Activated CD4-positive, alpha-beta T cell treated with anti-CD3 and anti-CD28 coated beads for 36 hours (primary cell): ENCODE measurements at regions of chr4 and their contacts with region 1.

Region 1: DNA sequence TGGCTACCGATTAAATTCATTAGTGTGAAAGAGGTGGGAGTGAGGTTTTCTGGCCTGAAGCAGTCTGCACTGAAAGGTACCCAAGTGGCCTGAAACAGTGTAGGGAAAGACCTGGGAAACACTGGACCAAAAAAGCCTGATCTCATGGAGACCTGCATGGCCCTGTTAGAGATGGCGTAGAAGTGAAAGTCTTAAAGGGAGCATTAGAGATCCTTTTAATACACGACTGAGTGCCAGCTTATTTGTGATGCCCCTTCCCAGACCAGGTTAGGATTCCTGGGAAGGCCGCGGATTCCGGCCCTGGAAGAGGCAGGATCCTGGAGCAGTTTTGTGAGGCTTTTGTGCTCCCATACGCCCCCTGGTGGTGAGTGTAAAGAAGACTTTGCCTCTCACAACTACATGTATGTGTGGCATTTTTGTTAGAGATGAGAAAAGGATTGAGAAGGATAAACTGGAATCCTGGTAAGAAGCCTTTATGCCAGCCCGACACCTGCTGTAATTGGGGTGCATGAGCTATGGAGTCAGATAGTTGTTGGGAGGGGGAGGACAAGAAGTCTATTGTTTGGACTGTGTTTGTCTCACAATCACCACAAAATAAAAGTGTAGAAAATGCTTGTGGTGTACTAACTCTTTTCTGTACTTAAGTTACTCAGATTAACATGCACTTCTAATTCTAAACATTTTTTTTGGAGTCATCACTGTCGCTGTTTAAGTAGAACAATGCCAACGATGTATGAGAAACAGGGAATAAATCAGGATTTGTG is 54.0 kb downstream of the JADE1 start:
- DNase-seq: peak; percentile 79
- ATAC-seq: no peak
- H3K4me3 Mint-ChIP-seq: no peak overlapping the region
- H3K27ac Mint-ChIP-seq: peak overlapping the region; percentile 80
- H3K4me1 Mint-ChIP-seq: peaks cover 46% of the 10 kb centered on the region
- H3K27me3 Mint-ChIP-seq: no peaks in the 10 kb centered on the region

Region 2: GRCh38 chr4:128287871-128288688 is 575.4 kb before region 1 on chr4:
- CTCF ChIA-PET with region 1: no interaction called
- POLR2A ChIA-PET with region 1: interaction called, 3 read pairs
- intact Hi-C with region 1: loop called in 1 of 2 experiments (anchors 2 kb)
- DNase-seq: peak; percentile 100
- ATAC-seq: peak; percentile 85
- H3K4me3 Mint-ChIP-seq: peak overlapping the region; percentile 79
- H3K27ac Mint-ChIP-seq: peak overlapping the region; percentile 93
- H3K4me1 Mint-ChIP-seq: peaks cover 27% of the 10 kb centered on the region
- H3K27me3 Mint-ChIP-seq: no peaks in the 10 kb centered on the region

Region 3: DNA sequence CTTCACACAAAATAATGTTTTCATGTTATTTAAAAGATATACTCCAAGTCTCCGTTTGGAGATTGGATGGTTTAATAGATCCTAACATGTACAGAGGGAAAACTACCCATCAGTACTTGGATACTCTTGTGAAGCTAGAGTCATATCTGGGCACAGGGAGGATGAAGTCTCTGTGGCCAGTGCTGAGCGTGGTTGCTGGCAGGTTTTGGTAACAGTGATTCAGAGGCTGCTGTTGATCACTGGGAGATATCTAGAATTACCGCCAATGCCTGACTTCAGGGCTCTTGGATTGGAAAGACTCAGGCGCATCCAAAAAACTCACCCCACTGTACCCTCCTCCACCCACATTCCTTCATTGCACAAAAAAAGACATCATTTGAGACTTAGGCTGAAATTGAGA is 468.7 kb before region 1 on chr4:
- CTCF ChIA-PET with region 1: no interaction called
- POLR2A ChIA-PET with region 1: no interaction called
- intact Hi-C with region 1: no loop called
- DNase-seq: no peak
- ATAC-seq: no peak
- H3K4me3 Mint-ChIP-seq: no peak overlapping the region
- H3K27ac Mint-ChIP-seq: no peak overlapping the region
- H3K4me1 Mint-ChIP-seq: no peaks in the 10 kb centered on the region
- H3K27me3 Mint-ChIP-seq: no peaks in the 10 kb centered on the region

Region 4: GRCh38 chr4:128454281-128455075 is 409.0 kb before region 1 on chr4:
- CTCF ChIA-PET with region 1: interaction called, 7 read pairs
- POLR2A ChIA-PET with region 1: no interaction called
- intact Hi-C with region 1: loop called (anchors 2 to 5 kb)
- DNase-seq: peak; percentile 84
- ATAC-seq: peak; percentile 98
- H3K4me3 Mint-ChIP-seq: no peak overlapping the region
- H3K27ac Mint-ChIP-seq: no peak overlapping the region
- H3K4me1 Mint-ChIP-seq: peaks cover 11% of the 10 kb centered on the region
- H3K27me3 Mint-ChIP-seq: peaks cover 2% of the 10 kb centered on the region

Region 5: GRCh38 chr4:128574706-128575105 is 288.8 kb before region 1 on chr4:
- CTCF ChIA-PET with region 1: interaction called, 3 read pairs
- POLR2A ChIA-PET with region 1: no interaction called
- intact Hi-C with region 1: loop called in 1 of 2 experiments (anchors 5 kb)
- DNase-seq: peak; percentile 87
- ATAC-seq: peak; percentile 84
- H3K4me3 Mint-ChIP-seq: no peak overlapping the region
- H3K27ac Mint-ChIP-seq: no peak overlapping the region
- H3K4me1 Mint-ChIP-seq: no peaks in the 10 kb centered on the region
- H3K27me3 Mint-ChIP-seq: no peaks in the 10 kb centered on the region

Region 6: GRCh38 chr4:128782076-128782715 is 81.3 kb before region 1 on chr4:
- CTCF ChIA-PET with region 1: no interaction called
- POLR2A ChIA-PET with region 1: no interaction called
- intact Hi-C with region 1: loop called (anchors 1 kb)
- DNase-seq: peak; percentile 59
- ATAC-seq: peak; percentile 65
- H3K4me3 Mint-ChIP-seq: no peak overlapping the region
- H3K27ac Mint-ChIP-seq: no peak overlapping the region
- H3K4me1 Mint-ChIP-seq: no peaks in the 10 kb centered on the region
- H3K27me3 Mint-ChIP-seq: peaks cover 2% of the 10 kb centered on the region

Region 7: GRCh38 chr4:128823025-128823661 is 40.4 kb before region 1 on chr4:
- CTCF ChIA-PET with region 1: interaction called, 9 read pairs
- POLR2A ChIA-PET with region 1: no interaction called
- intact Hi-C with region 1: loop called in 1 of 2 experiments (anchors 5 kb)
- DNase-seq: no peak
- ATAC-seq: no peak
- H3K4me3 Mint-ChIP-seq: no peak overlapping the region
- H3K27ac Mint-ChIP-seq: peak overlapping the region; percentile 18
- H3K4me1 Mint-ChIP-seq: peaks cover 77% of the 10 kb centered on the region
- H3K27me3 Mint-ChIP-seq: no peaks in the 10 kb centered on the region

Region 8: GRCh38 chr4:129093191-129093920 is 229.9 kb after region 1 on chr4 and contains the start of gene SCLT1:
- CTCF ChIA-PET with region 1: interaction called, 3 read pairs
- POLR2A ChIA-PET with region 1: no interaction called
- intact Hi-C with region 1: loop called (anchors 2 kb)
- DNase-seq: peak; percentile 98
- ATAC-seq: peak; percentile 94
- H3K4me3 Mint-ChIP-seq: no peak within 1 kb of the TSS
- H3K27ac Mint-ChIP-seq: peak within 1 kb of the TSS; percentile 35
- H3K4me1 Mint-ChIP-seq: peaks cover 27% of the 10 kb centered on the region
- H3K27me3 Mint-ChIP-seq: no peaks in the 10 kb centered on the region
- total RNA-seq, gene SCLT1: 18.7 to 19.3 TPM

Region 9: GRCh38 chr4:129213692-129214091 is 350.2 kb after region 1 on chr4:
- CTCF ChIA-PET with region 1: no interaction called
- POLR2A ChIA-PET with region 1: no interaction called
- intact Hi-C with region 1: no loop called
- DNase-seq: no peak
- ATAC-seq: no peak
- H3K4me3 Mint-ChIP-seq: no peak overlapping the region
- H3K27ac Mint-ChIP-seq: no peak overlapping the region
- H3K4me1 Mint-ChIP-seq: no peaks in the 10 kb centered on the region
- H3K27me3 Mint-ChIP-seq: no peaks in the 10 kb centered on the region